ENCODE measurements at regions of chr9 and their contacts with region 1.

Region 1: GRCh38 chr9:78014776-78015175 is 16.8 kb downstream of the GNAQ start:
- DNase-seq: no peak
- H3K4me3 ChIP-seq: no peak overlapping the region
- H3K27ac ChIP-seq: no peak overlapping the region
- H3K4me1 ChIP-seq: peaks cover 11% of the 10 kb centered on the region
- H3K27me3 ChIP-seq: no peaks in the 10 kb centered on the region
- CTCF ChIP-seq: no peak

Region 2: DNA sequence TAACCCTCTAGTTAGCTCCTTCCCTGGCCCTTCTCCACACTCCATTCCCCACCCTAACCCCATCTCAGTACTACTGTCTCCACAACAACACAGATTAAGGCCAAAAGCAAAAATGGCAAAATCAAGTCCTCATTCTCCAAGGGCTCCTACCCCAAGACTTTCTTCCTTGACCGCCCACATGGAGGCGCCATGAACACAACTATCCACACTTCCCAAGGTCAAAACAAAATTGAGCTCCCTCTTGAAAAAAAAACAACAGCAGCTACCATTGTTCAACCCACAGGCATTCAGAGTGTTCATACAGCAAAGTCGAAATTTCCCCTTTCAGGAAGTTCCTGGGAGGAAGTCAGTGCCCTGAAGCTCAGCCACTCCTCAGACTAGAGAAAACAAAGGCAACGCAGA is 37.6 kb before region 1 on chr9:
- intact Hi-C with region 1: loop called (anchors 5 kb)
- DNase-seq: peak; percentile 77
- H3K4me3 ChIP-seq: no peak overlapping the region
- H3K27ac ChIP-seq: peak overlapping the region; percentile 76
- H3K4me1 ChIP-seq: peaks cover 11% of the 10 kb centered on the region
- H3K27me3 ChIP-seq: no peaks in the 10 kb centered on the region
- CTCF ChIP-seq: peak; percentile 51